MCF 10A (cell line): ENCODE measurements at regions of chr19 and their contacts with region 1.

Region 1: GRCh38 chr19:28633319-28634018 is 579.5 kb downstream of the UQCRFS1 start:
- DNase-seq: no peak
- H3K4me3 Mint-ChIP-seq: no peak overlapping the region
- H3K27ac Mint-ChIP-seq: no peak overlapping the region
- H3K4me1 Mint-ChIP-seq: no peaks in the 10 kb centered on the region
- H3K27me3 Mint-ChIP-seq: no peaks in the 10 kb centered on the region
- CTCF ChIP-seq: peak; percentile 36

Region 2: GRCh38 chr19:28466107-28467045 is 167.1 kb before region 1 on chr19:
- CTCF ChIA-PET with region 1: no interaction called
- POLR2A ChIA-PET with region 1: no interaction called
- intact Hi-C with region 1: loop called (anchors 5 kb)
- DNase-seq: peak; percentile 0
- H3K4me3 Mint-ChIP-seq: no peak overlapping the region
- H3K27ac Mint-ChIP-seq: no peak overlapping the region
- H3K4me1 Mint-ChIP-seq: no peaks in the 10 kb centered on the region
- H3K27me3 Mint-ChIP-seq: no peaks in the 10 kb centered on the region
- CTCF ChIP-seq: peak; percentile 23

Region 3: GRCh38 chr19:28705008-28705407 is 71.5 kb after region 1 on chr19:
- CTCF ChIA-PET with region 1: no interaction called
- POLR2A ChIA-PET with region 1: no interaction called
- intact Hi-C with region 1: no loop called
- DNase-seq: no peak
- H3K4me3 Mint-ChIP-seq: no peak overlapping the region
- H3K27ac Mint-ChIP-seq: no peak overlapping the region
- H3K4me1 Mint-ChIP-seq: no peaks in the 10 kb centered on the region
- H3K27me3 Mint-ChIP-seq: no peaks in the 10 kb centered on the region
- CTCF ChIP-seq: no peak